Activated naive CD4-positive, alpha-beta T cell treated with anti-CD3 and anti-CD28 coated beads for 36 hours (primary cell): ENCODE measurements at regions of chr10 and their contacts with region 1.

Region 1: GRCh38 chr10:96229568-96230030 is 41.8 kb downstream of the BLNK start:
- DNase-seq: peak; percentile 80
- H3K4me3 Mint-ChIP-seq: no peak overlapping the region
- H3K27ac Mint-ChIP-seq: no peak overlapping the region
- H3K4me1 Mint-ChIP-seq: no peaks in the 10 kb centered on the region
- H3K27me3 Mint-ChIP-seq: no peaks in the 10 kb centered on the region

Region 2: GRCh38 chr10:96208271-96208670 is 21.3 kb before region 1 on chr10:
- CTCF ChIA-PET with region 1: interaction called, 19 read pairs
- intact Hi-C with region 1: no loop called
- DNase-seq: no peak
- H3K4me3 Mint-ChIP-seq: no peak overlapping the region
- H3K27ac Mint-ChIP-seq: no peak overlapping the region
- H3K4me1 Mint-ChIP-seq: no peaks in the 10 kb centered on the region
- H3K27me3 Mint-ChIP-seq: peaks cover 5% of the 10 kb centered on the region

Region 3: GRCh38 chr10:96255549-96256331 is 26.1 kb after region 1 on chr10:
- CTCF ChIA-PET with region 1: interaction called, 12 read pairs
- intact Hi-C with region 1: no loop called
- DNase-seq: no peak
- H3K4me3 Mint-ChIP-seq: no peak overlapping the region
- H3K27ac Mint-ChIP-seq: no peak overlapping the region
- H3K4me1 Mint-ChIP-seq: no peaks in the 10 kb centered on the region
- H3K27me3 Mint-ChIP-seq: no peaks in the 10 kb centered on the region

Region 4: GRCh38 chr10:96287392-96288105 is 58.0 kb after region 1 on chr10:
- CTCF ChIA-PET with region 1: interaction called, 98 read pairs
- intact Hi-C with region 1: no loop called
- DNase-seq: no peak
- H3K4me3 Mint-ChIP-seq: no peak overlapping the region
- H3K27ac Mint-ChIP-seq: no peak overlapping the region
- H3K4me1 Mint-ChIP-seq: peaks cover 15% of the 10 kb centered on the region
- H3K27me3 Mint-ChIP-seq: no peaks in the 10 kb centered on the region

Region 5: GRCh38 chr10:96321822-96322221 is 92.2 kb after region 1 on chr10:
- CTCF ChIA-PET with region 1: interaction called, 11 read pairs
- intact Hi-C with region 1: no loop called
- DNase-seq: peak; percentile 18
- H3K4me3 Mint-ChIP-seq: no peak overlapping the region
- H3K27ac Mint-ChIP-seq: no peak overlapping the region
- H3K4me1 Mint-ChIP-seq: peaks cover 4% of the 10 kb centered on the region
- H3K27me3 Mint-ChIP-seq: peaks cover 5% of the 10 kb centered on the region

Region 6: GRCh38 chr10:96339957-96340904 is 110.6 kb after region 1 on chr10:
- CTCF ChIA-PET with region 1: interaction called, 62 read pairs
- intact Hi-C with region 1: loop called (anchors 1 kb)
- DNase-seq: peak; percentile 83
- H3K4me3 Mint-ChIP-seq: no peak overlapping the region
- H3K27ac Mint-ChIP-seq: no peak overlapping the region
- H3K4me1 Mint-ChIP-seq: peaks cover 6% of the 10 kb centered on the region
- H3K27me3 Mint-ChIP-seq: no peaks in the 10 kb centered on the region

Region 7: GRCh38 chr10:96440361-96441292 is 211.0 kb after region 1 on chr10:
- CTCF ChIA-PET with region 1: no interaction called
- intact Hi-C with region 1: no loop called
- DNase-seq: no peak
- H3K4me3 Mint-ChIP-seq: no peak overlapping the region
- H3K27ac Mint-ChIP-seq: no peak overlapping the region
- H3K4me1 Mint-ChIP-seq: no peaks in the 10 kb centered on the region
- H3K27me3 Mint-ChIP-seq: peaks cover 2% of the 10 kb centered on the region